Activated naive CD8-positive, alpha-beta T cell treated with anti-CD3 and anti-CD28 coated beads, Interleukin-2, amount 10 ng/mL, durations not matched to agents 7 days and 5 days (primary cell): ENCODE measurements at regions of chr17 and their contacts with region 1.

Region 1: GRCh38 chr17:27805520-27806146 is 5.3 kb upstream of the NOS2 start:
- DNase-seq: peak; percentile 79
- ATAC-seq: peak; percentile 38
- H3K4me3 Mint-ChIP-seq: peak overlapping the region; percentile 71
- H3K27ac Mint-ChIP-seq: peak overlapping the region; percentile 93
- H3K4me1 Mint-ChIP-seq: peaks cover 40% of the 10 kb centered on the region
- H3K27me3 Mint-ChIP-seq: peaks cover 2% of the 10 kb centered on the region

Region 2: DNA sequence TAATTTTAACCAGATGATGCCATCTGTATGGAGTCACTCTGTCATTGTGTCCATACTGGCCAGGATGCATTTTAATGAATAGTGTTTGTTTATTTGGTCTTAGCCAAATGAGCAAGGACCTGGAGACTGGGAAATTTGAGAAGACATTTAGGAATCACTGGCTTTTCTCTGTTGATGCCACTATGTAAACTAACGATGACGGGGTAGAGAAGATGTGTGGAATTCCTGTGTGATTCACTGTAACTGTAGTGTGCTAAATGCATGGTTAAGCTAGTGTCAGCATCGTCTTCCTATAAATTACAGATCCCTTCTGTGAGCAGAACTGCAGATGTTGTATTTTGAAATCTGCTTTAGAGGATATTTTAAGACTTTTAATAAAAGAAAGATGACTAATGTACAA is 71.9 kb before region 1 on chr17:
- POLR2A ChIA-PET with region 1: no interaction called
- DNase-seq: no peak
- ATAC-seq: no peak
- H3K4me3 Mint-ChIP-seq: no peak overlapping the region
- H3K27ac Mint-ChIP-seq: no peak overlapping the region
- H3K4me1 Mint-ChIP-seq: no peaks in the 10 kb centered on the region
- H3K27me3 Mint-ChIP-seq: peaks cover 57% of the 10 kb centered on the region

Region 3: DNA sequence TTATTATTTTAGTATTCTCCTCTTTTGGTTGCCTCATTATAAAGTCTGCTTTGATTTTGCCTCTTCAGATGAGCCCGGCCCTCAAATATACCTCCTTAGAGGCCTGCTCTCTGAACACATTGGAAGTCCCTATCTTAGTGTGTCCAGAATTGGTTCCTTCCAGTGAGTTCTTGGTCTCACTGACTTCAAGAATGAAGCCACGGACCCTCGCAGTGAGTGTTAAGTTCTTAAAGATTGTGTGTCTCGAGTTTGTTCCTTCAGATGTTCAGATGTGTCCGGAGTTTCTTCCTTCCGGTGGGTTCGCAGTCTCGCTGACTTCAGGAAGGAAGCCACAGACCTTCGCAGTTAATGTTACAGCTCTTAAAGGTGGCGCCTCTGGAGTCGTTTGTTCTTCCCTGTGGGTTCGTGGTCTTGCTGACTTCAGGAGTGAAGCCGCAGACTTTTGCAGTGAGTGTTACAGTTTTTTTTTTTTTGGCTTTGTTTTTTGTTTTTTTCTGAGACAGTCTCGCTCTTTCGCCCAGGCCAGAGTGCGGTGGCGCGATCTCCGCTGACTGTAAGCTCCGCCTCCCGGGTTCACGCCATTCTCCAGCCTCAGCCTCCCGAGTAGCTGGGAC is 40.5 kb after region 1 on chr17:
- POLR2A ChIA-PET with region 1: interaction called, 12 read pairs
- DNase-seq: peak; percentile 60
- ATAC-seq: peak; percentile 76
- H3K4me3 Mint-ChIP-seq: peak overlapping the region; percentile 75
- H3K27ac Mint-ChIP-seq: peak overlapping the region; percentile 81
- H3K4me1 Mint-ChIP-seq: peaks cover 26% of the 10 kb centered on the region
- H3K27me3 Mint-ChIP-seq: no peaks in the 10 kb centered on the region

Region 4: GRCh38 chr17:27879987-27880608 is 74.5 kb after region 1 on chr17:
- POLR2A ChIA-PET with region 1: interaction called, 44 read pairs
- DNase-seq: peak; percentile 78
- ATAC-seq: peak; percentile 76
- H3K4me3 Mint-ChIP-seq: no peak overlapping the region
- H3K27ac Mint-ChIP-seq: peak overlapping the region; percentile 43
- H3K4me1 Mint-ChIP-seq: peaks cover 27% of the 10 kb centered on the region
- H3K27me3 Mint-ChIP-seq: no peaks in the 10 kb centered on the region

Region 5: GRCh38 chr17:27892866-27893769 is 87.5 kb after region 1 on chr17 and contains the start of gene LYRM9:
- POLR2A ChIA-PET with region 1: interaction called, 41 read pairs
- DNase-seq: peak; percentile 99
- ATAC-seq: peak; percentile 99
- H3K4me3 Mint-ChIP-seq: peak within 1 kb of the TSS; percentile 82
- H3K27ac Mint-ChIP-seq: peak within 1 kb of the TSS; percentile 65
- H3K4me1 Mint-ChIP-seq: peaks cover 21% of the 10 kb centered on the region
- H3K27me3 Mint-ChIP-seq: peaks cover 33% of the 10 kb centered on the region
- total RNA-seq, gene LYRM9: 8.0 to 8.3 TPM